ENCODE measurements at regions of chr16 and their contacts with region 1.

Region 1: DNA sequence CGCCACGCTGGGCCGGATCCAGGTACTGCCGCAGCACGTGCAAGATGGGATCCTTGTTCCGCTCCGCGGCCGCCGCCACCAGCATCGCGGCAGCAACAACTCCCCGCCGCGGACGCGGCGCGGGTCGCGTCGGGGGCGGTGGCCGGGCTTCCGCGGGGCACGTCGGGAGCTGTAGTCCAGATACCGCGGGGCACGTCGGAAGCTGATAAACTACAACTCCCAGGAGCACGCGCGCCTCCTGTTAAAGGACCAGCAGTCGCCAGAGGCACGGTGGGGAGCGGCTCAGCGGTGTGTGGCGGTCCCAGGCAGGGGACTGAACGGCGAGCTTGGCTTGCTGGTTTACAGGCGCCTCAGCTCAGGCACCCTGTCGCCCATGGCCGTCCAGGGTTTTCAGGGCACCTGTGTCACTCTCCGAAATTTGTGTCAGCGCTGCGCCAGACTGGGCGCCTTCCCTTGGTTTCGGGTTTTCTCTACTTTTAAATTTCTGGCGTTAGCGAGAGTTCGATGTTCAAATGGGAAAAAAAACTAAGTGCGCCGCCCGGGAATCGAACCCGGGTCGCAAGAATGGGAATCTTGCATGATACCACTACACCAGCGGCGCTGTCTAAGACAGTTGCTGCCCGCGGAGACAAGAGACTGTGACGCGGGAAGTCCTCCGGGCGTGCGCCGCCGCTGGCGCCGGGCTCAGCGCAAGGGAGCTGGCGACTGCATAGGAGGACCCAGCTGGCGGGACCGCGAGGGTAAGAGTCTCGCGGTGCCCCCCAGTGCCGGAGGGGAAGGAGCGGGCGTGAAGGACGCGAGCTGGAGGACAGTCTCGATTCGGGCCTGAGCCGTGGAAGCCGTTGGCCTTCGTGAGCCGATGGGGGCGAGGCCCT is at the start of gene METTL26:
- DNase-seq: peak; percentile 98
- H3K4me3 ChIP-seq: peak within 1 kb of the TSS; percentile 66 to 91 (median 82)
- H3K27ac ChIP-seq: peak within 1 kb of the TSS; percentile 93 to 98 (median 95)
- H3K4me1 ChIP-seq: peaks cover 22 to 49% (median 42%) of the 10 kb centered on the region in 4 donors
- H3K27me3 ChIP-seq: peaks cover 0 to 13% (median 0%) of the 10 kb centered on the region in 4 donors
- CTCF ChIP-seq: peak in 2 of 3 experiments; percentile 1 to 34
- EP300 ChIP-seq: no peak
- POLR2A ChIP-seq: no peak
- total RNA-seq, gene METTL26: 129 to 166 (median 142) TPM

Region 2: DNA sequence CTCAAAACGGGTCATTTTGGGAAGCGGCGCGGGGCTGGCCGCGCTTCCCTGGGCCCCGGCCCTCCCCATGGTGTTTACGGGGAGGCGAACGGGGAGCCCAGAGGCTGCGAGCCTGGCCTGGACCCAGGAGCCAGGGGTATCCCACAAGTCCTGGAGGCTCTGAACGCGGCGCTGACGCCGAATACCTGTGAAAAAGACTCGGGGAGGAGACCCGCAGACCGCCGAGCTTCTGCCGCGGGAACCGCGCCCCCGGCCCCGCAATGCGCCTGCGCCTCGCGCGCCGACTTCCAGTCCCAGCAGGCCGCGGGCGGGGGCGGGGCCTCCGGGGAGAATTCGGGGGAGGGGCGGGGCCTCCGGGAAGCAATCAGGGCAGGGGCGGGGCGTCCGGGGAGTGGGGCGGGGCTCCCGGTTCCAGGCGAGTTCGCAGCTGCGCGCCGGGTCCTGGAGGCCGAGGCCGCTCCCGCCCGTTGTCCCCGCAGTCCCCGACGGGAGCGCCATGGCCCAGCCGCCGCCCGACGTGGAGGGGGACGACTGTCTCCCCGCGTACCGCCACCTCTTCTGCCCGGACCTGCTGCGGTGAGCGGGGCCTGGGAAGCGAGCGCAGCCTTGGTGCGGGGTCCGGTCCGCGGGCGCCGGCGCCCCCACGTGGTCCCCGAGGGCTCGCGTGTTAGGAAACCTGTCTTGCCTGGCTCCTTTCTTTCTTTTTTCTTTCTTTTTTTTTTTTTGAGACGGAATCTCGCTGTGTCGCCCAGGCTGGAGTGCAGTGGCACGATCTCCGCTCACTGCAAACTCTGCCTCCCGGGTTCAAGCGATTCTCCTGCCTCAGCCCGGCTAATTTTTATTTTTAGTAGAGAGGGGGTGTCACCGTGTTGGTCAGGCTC is 234.7 kb before region 1 on chr16 and contains the start of gene DECR2:
- intact Hi-C with region 1: loop called (anchors 5 kb)
- DNase-seq: peak; percentile 99
- H3K4me3 ChIP-seq: peak within 1 kb of the TSS; percentile 64 to 95 (median 85)
- H3K27ac ChIP-seq: peak within 1 kb of the TSS; percentile 85 to 91 (median 90)
- H3K4me1 ChIP-seq: peaks cover 17 to 50% (median 41%) of the 10 kb centered on the region in 4 donors
- H3K27me3 ChIP-seq: no peaks in the 10 kb centered on the region
- CTCF ChIP-seq: peak; percentile 55 to 62 (median 61)
- EP300 ChIP-seq: no peak
- POLR2A ChIP-seq: peak; percentile 72
- total RNA-seq, gene DECR2: 11.8 to 18.3 (median 17.4) TPM

Region 3: GRCh38 chr16:502179-502943 is 134.1 kb before region 1 on chr16:
- intact Hi-C with region 1: no loop called
- DNase-seq: no peak
- H3K4me3 ChIP-seq: no peak overlapping the region
- H3K27ac ChIP-seq: no peak overlapping the region
- H3K4me1 ChIP-seq: no peaks in the 10 kb centered on the region
- H3K27me3 ChIP-seq: no peaks in the 10 kb centered on the region
- CTCF ChIP-seq: no peak
- EP300 ChIP-seq: no peak
- POLR2A ChIP-seq: no peak

Region 4: GRCh38 chr16:589658-590159 is 46.7 kb before region 1 on chr16 and contains the start of gene RAB40C:
- intact Hi-C with region 1: loop called (anchors 5 kb)
- DNase-seq: peak; percentile 100
- H3K4me3 ChIP-seq: peak within 1 kb of the TSS; percentile 83 to 94 (median 88)
- H3K27ac ChIP-seq: peak within 1 kb of the TSS; percentile 93 to 98 (median 96)
- H3K4me1 ChIP-seq: peaks cover 36 to 68% (median 58%) of the 10 kb centered on the region in 4 donors
- H3K27me3 ChIP-seq: peaks cover 0 to 9% (median 0%) of the 10 kb centered on the region in 4 donors
- CTCF ChIP-seq: peak in 1 of 3 experiments; percentile 17
- EP300 ChIP-seq: no peak
- POLR2A ChIP-seq: no peak
- total RNA-seq, gene RAB40C: 20.8 to 25.3 (median 23.0) TPM

Measured in esophagus muscularis mucosa (tissue), 4 donors.